Aorta (tissue), 5 donors: ENCODE measurements at regions of chr18 and their contacts with region 1.

Region 1: GRCh38 chr18:48834413-48835031 is 116.2 kb downstream of the SMAD7 start:
- DNase-seq: peak; percentile 93 to 96
- ATAC-seq: peak; percentile 76
- H3K4me3 ChIP-seq: no peak overlapping the region
- H3K27ac ChIP-seq: no peak overlapping the region
- H3K4me1 ChIP-seq: peaks cover 0 to 4% of the 10 kb centered on the region in 2 donors
- H3K27me3 ChIP-seq: no peaks in the 10 kb centered on the region

Region 2: GRCh38 chr18:48355276-48356115 is 479.0 kb before region 1 on chr18:
- intact Hi-C with region 1: no loop called
- DNase-seq: no peak
- ATAC-seq: no peak
- H3K4me3 ChIP-seq: no peak overlapping the region
- H3K27ac ChIP-seq: peak overlapping the region in 1 of 2 donors; percentile 32
- H3K4me1 ChIP-seq: no peaks in the 10 kb centered on the region
- H3K27me3 ChIP-seq: no peaks in the 10 kb centered on the region

Region 3: DNA sequence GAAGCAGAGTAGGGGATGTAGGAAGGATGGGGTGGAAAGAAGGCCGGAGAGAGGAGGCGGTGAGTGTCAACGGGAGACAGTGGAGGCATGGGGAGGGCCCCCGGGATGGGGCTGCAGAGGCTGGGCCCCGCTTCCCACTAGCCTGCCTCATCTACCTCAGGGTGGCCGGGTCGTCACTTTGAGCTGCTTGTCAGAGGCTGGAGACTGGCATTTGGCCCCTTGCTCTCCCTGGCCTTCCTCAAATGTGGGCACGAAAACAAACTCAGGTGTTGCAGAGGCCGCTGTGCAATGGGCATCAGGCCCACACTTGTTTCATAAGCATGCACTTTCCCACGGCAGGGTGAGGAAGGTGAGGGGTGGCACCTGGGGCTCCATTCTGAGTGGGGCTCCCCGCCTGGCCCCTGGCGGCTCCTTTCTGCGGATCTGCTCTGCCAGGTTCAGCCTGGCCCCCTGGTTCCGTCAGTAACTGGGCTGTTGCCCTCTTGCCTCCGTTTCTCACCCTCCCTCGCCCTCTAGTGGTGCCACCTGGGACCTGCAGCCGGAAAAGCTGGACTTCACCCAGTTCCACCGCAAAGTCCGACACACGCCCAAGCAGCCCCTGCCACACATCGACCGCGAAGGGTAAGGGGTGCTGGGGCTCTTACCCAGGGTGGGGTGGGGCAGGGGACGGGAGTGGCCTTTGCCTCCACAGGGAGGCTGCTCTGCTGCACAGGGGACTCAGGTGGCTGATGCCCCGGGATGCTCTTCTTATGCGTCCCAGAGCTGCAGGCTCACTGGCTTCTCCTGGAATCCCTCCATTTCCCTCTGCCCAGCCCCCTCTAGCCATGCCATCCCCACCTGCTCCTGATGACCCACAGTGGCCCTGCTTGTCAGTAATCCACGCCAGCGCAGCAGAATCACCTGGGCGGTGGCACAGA is 170.3 kb before region 1 on chr18:
- intact Hi-C with region 1: no loop called
- DNase-seq: peak; percentile 80 to 93
- ATAC-seq: peak; percentile 78
- H3K4me3 ChIP-seq: no peak overlapping the region
- H3K27ac ChIP-seq: no peak overlapping the region
- H3K4me1 ChIP-seq: no peaks in the 10 kb centered on the region
- H3K27me3 ChIP-seq: no peaks in the 10 kb centered on the region

Region 4: DNA sequence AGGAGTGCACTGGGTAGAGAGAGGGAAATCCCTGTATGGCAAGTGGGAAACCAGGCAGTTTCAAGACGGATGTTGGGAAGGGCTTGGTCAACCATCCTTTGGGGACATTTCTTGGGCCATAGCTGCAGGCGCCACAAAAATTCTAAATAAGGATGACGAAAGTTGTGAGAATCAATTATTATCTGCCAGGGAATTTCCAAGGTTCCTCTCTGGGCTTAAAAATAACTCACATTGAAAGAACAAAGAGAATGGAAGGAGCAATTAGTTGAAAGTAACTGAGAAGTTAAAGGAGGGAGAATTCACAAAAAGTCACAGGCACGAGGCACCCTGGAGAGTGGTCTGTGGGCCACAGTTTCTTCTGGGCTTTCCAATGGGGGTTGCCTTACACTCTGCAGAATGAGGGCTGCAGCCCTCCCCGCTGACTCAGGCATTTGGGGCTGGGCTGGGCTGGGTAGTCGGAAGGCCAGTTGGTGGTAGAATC is 79.5 kb before region 1 on chr18:
- intact Hi-C with region 1: no loop called
- DNase-seq: no peak
- ATAC-seq: no peak
- H3K4me3 ChIP-seq: no peak overlapping the region
- H3K27ac ChIP-seq: no peak overlapping the region
- H3K4me1 ChIP-seq: peaks cover 0 to 2% of the 10 kb centered on the region in 2 donors
- H3K27me3 ChIP-seq: no peaks in the 10 kb centered on the region

Region 5: DNA sequence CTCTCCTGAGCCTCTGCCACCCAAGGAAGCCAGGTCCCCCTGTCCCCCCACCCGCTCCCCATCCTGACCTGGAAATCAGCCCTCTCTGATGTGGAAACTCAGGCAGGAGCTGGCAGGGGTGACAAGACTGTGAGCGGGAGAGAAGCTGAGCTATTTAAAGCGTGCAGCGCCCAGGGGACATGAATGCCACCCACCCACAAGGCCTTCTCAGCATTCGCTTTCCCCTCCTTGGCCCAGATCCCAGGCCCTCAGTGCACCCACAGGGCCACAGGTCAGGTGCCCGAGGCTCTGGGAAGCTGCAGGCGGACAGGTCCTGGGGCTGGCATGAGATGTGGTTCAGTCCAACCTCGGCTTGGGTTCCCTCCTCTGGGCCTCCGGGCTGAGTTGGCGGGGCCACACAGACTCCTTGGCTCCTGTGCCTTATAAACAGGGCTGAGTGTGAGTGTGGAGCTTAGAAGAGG is 52.1 kb before region 1 on chr18:
- intact Hi-C with region 1: loop called in 1 of 2 experiments (anchors 2 kb)
- DNase-seq: peak; percentile 87 to 88
- ATAC-seq: peak; percentile 69
- H3K4me3 ChIP-seq: no peak overlapping the region
- H3K27ac ChIP-seq: peak overlapping the region; percentile 80 to 90
- H3K4me1 ChIP-seq: no peaks in the 10 kb centered on the region
- H3K27me3 ChIP-seq: no peaks in the 10 kb centered on the region

Region 6: DNA sequence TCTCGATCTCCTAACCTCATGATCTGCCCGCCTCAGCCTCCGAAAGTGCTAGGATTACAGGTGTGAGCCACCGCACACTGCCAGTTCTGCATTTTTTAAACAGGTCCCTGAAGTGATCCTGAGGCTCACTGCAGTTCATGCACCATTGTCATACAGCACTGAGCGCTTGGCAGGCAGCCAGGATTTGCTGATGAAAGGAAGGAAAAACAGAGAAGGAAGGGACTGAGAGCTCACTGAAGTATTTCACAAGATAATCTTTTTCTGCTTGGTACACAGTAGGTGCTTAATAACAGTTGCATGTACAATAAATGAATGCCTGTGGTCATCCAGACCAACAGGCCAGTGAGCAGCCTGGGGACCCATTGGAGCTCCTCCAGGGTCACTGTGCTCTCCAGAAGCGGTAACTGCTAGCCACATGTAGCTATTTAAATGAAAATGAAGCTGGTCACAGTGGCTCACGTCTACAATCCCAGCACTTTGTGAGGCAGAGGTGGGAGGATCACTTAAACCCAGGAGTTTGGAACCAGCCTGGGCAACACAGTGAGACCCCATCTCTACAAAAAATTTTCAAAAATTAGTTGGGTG is 149.3 kb after region 1 on chr18:
- intact Hi-C with region 1: no loop called
- DNase-seq: peak in 1 of 2 donors; percentile 87
- ATAC-seq: no peak
- H3K4me3 ChIP-seq: no peak overlapping the region
- H3K27ac ChIP-seq: no peak overlapping the region
- H3K4me1 ChIP-seq: no peaks in the 10 kb centered on the region
- H3K27me3 ChIP-seq: no peaks in the 10 kb centered on the region